Left colon (tissue), 2 donors: ENCODE measurements at regions of chr3 and their contacts with region 1.

Region 1: GRCh38 chr3:70358978-70359580 is 46.6 kb upstream of the MDFIC2 start:
- DNase-seq: no peak
- ATAC-seq: no peak

Region 2: GRCh38 chr3:69879051-69879450 is 480.0 kb before region 1 on chr3:
- intact Hi-C with region 1: no loop called
- DNase-seq: no peak
- ATAC-seq: no peak

Region 3: GRCh38 chr3:70120357-70121121 is 238.5 kb before region 1 on chr3:
- intact Hi-C with region 1: loop called in 1 of 2 experiments (anchors 10 kb)
- DNase-seq: peak; percentile 42 to 87
- ATAC-seq: peak; percentile 86